H1 (cell line): ENCODE measurements at regions of chr5 and their contacts with region 1.

Region 1: DNA sequence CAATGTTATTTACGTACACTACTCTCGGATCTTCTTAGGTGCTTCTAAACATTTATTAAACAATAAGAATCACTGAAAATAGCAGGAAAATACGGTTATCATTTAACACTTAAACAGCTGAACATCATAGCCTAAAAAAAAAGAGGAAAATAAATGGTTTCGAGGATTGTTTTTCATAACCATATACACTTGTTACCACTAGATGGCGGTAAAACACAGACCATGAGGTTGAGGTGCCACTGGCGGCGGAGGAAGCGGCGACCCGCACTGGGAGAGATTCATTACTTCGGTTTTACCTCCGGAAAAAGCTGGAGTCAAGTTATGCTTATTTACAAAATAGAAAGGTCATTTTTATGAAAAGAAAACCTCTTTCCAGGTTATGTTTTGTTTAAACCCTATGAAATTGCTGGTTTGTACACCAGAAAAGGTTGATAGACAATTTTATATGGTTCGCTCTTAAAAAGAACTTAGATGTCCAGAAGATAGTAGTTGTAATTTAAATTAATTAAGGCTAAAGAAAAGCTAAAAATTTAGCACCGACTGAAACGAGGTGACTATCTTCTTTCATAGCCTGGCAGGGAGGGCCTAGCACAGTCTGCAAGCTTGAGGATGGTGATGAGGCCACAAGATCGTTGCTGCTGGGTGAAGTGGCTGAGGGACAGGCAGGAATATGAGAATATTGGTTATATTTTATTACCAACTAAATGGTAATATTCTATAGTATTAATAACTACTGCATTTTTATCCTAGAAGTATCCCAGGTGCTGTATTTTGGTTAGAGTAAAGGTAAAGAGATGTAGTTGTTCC is 605.7 kb downstream of the RAB3C start:
- DNase-seq: peak in 1 of 2 experiments; percentile 25
- H3K4me3 ChIP-seq: peak overlapping the region in 1 of 4 experiments; percentile 26; a peak in 1 of 8 replicates
- H3K27ac ChIP-seq: no peak overlapping the region
- H3K4me1 ChIP-seq: peaks cover 0 to 5% (median 2%) of the 10 kb centered on the region in 4 experiments; a peak in 3 of 7 replicates
- H3K27me3 ChIP-seq: no peaks in the 10 kb centered on the region
- CTCF ChIP-seq: peak; percentile 46 to 82 (median 71)
- EP300 ChIP-seq: no peak
- POLR2A ChIP-seq: no peak
- RAD21 ChIP-seq: peak; percentile 93 to 94

Region 2: GRCh38 chr5:58902765-58903164 is 285.9 kb before region 1 on chr5:
- CTCF ChIA-PET with region 1: no interaction called
- POLR2A ChIA-PET with region 1: no interaction called
- DNase-seq: no peak
- H3K4me3 ChIP-seq: no peak overlapping the region
- H3K27ac ChIP-seq: no peak overlapping the region
- H3K4me1 ChIP-seq: no peaks in the 10 kb centered on the region
- H3K27me3 ChIP-seq: no peaks in the 10 kb centered on the region
- CTCF ChIP-seq: no peak
- EP300 ChIP-seq: no peak
- POLR2A ChIP-seq: no peak
- RAD21 ChIP-seq: no peak; a peak in 1 of 4 replicates

Region 3: DNA sequence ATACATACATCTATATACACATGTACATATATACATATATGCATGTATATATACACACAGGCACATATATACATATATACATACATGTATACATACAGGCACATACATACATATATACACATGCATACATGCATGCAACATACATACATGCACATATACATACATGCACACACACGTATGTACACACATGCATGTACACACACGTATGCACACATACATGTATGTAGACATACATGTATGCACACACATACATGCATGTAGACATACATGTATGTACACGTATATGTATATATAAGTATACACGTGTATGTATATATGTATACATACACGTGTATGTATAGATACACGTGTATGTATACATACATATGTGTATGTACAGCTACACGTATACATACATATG is 11.2 kb after region 1 on chr5:
- CTCF ChIA-PET with region 1: interaction called, 17 read pairs
- POLR2A ChIA-PET with region 1: no interaction called
- DNase-seq: no peak
- H3K4me3 ChIP-seq: no peak overlapping the region
- H3K27ac ChIP-seq: no peak overlapping the region
- H3K4me1 ChIP-seq: no peaks in the 10 kb centered on the region
- H3K27me3 ChIP-seq: peaks cover 0 to 1% (median 0%) of the 10 kb centered on the region in 4 experiments; a peak in 1 of 7 replicates
- CTCF ChIP-seq: no peak
- EP300 ChIP-seq: no peak
- POLR2A ChIP-seq: no peak
- RAD21 ChIP-seq: no peak

Region 4: GRCh38 chr5:59358005-59358861 is 169.6 kb after region 1 on chr5:
- CTCF ChIA-PET with region 1: interaction called, 10 read pairs
- POLR2A ChIA-PET with region 1: no interaction called
- DNase-seq: no peak
- H3K4me3 ChIP-seq: no peak overlapping the region; a peak in 1 of 8 replicates
- H3K27ac ChIP-seq: no peak overlapping the region
- H3K4me1 ChIP-seq: peaks cover 0 to 21% (median 12%) of the 10 kb centered on the region in 4 experiments; a peak in 6 of 7 replicates
- H3K27me3 ChIP-seq: no peaks in the 10 kb centered on the region
- CTCF ChIP-seq: no peak
- EP300 ChIP-seq: no peak
- POLR2A ChIP-seq: no peak
- RAD21 ChIP-seq: no peak

Region 5: GRCh38 chr5:59380350-59380951 is 191.8 kb after region 1 on chr5:
- CTCF ChIA-PET with region 1: interaction called, 19 read pairs
- POLR2A ChIA-PET with region 1: interaction called, 3 read pairs
- DNase-seq: no peak
- H3K4me3 ChIP-seq: no peak overlapping the region
- H3K27ac ChIP-seq: no peak overlapping the region
- H3K4me1 ChIP-seq: no peaks in the 10 kb centered on the region
- H3K27me3 ChIP-seq: no peaks in the 10 kb centered on the region
- CTCF ChIP-seq: peak in 1 of 3 experiments; percentile 20; a peak in 1 of 4 replicates
- EP300 ChIP-seq: no peak
- POLR2A ChIP-seq: no peak
- RAD21 ChIP-seq: peak; percentile 49